OCI-LY7 (cell line): ENCODE measurements at regions of chr2 and their contacts with region 1.

Region 1: DNA sequence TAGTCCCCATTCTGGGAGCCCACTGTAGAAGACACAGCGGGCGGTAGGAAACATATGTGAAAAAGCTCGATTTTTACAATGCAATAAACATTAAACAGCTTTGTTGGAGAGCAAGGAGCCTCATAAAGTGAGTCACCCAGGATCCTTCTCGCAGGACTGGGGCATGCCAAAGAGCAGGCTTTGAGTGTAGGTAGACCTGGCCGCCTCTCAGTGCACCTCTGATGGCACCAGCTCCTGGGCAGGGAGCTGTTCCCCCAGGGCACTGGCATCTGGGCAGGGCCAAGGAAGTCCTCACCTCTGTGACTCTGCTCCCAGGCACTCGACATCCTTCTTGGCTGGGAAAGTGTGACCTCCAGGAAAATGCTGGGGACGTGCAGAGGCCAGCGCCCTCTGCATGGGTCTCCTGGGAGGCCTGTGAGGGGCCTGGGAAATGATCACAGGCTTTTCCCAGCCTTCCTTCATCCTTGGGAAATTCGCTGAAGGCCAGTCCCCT is 94.2 kb downstream of the POLR1A start:
- DNase-seq: no peak
- H3K4me3 ChIP-seq: no peak overlapping the region
- H3K27ac ChIP-seq: no peak overlapping the region
- H3K4me1 ChIP-seq: no peaks in the 10 kb centered on the region
- CTCF ChIP-seq: no peak

Region 2: DNA sequence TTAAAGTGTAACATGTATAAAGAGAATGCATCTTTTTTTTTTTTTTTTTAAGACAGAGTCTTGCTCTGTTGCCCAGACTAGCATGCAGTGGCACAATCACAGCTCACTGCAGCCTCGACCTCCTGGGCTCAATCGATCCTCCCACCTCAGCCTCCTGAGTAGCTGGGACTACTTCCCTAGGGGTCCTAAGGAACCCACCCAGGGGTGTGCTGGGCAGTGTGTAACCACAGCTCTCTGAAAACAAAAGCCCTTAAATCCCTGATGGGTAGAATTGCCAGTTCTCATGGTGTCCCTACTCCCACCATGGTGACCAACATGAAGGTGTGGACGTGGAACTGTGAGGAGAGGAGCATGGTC is 17.1 kb before region 1 on chr2:
- CTCF ChIA-PET with region 1: no interaction called
- POLR2A ChIA-PET with region 1: interaction called, 10 read pairs
- intact Hi-C with region 1: no loop called
- DNase-seq: no peak
- H3K4me3 ChIP-seq: no peak overlapping the region
- H3K27ac ChIP-seq: no peak overlapping the region
- H3K4me1 ChIP-seq: peaks cover 28% of the 10 kb centered on the region
- CTCF ChIP-seq: no peak

Region 3: DNA sequence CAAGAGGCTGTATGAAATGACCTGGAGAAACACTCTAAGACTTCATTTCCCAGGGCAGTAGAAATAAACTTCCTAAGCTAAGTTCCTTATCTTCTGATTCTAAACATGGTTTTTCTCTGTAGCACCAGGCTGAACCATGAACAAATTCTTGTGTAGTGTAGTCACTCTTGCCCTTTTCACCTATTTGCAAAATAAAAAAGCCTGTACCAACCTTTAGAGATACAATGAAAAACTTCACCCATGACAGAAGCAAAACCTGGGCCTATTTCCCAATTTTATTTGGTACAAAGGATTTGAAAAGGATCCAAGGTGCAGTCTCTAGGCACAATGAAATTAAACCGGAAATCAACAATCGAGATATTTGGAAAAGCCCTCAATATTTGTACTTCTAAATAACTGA is 50.5 kb after region 1 on chr2:
- CTCF ChIA-PET with region 1: no interaction called
- POLR2A ChIA-PET with region 1: no interaction called
- intact Hi-C with region 1: no loop called
- DNase-seq: no peak
- H3K4me3 ChIP-seq: no peak overlapping the region
- H3K27ac ChIP-seq: no peak overlapping the region
- H3K4me1 ChIP-seq: no peaks in the 10 kb centered on the region
- CTCF ChIP-seq: no peak